Activated CD4-positive, alpha-beta memory T cell treated with anti-CD3 and anti-CD28 coated beads for 36 hours (primary cell): ENCODE measurements at regions of chr9 and their contacts with region 1.

Region 1: DNA sequence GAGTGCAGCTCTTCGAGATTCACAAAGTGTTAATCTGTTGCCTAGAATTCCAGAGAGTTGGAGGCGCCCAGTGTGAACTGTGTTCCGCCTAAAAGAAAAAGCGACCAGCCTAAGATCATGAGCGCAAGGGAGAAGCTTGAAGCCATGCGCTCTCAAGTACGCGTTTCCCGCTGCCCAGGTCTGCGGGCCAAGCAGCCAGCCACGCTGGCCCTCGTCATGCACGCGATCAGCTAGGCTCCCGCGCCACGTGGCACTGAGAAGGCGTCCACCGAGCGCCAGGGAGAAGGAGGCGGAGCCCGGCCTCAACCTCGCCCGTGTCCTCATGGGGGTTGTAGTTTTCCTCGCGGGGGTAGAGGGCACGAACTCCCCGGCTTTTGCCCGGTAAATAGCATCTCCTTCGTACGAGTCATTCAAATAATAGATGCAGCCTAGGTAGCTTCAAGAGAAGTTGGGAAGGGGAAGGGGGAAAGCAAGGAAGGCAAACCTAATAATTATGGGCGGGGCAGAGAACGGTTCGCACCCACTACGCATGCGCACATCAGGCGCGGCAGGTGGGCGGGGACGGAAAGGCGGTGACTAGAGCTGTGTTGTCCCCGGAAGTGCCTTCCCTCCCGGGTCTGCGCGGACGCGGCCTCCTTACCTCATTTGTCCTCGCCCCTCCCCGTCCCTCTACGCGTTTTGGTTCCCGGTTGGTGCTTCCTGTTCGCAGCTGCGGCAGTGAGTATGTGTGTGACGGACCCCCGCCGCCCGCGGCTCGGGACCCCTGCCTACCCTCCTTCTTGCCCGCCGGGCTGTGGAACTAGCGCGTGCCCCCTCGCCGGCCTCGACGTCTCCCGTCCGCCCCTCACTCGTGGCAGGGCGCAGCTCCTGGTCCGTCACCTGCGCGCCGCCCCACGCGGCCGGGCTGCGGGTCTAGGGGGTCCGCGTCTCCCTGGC is at the start of gene ZCCHC7:
- DNase-seq: peak; percentile 98
- H3K4me3 Mint-ChIP-seq: peak within 1 kb of the TSS; percentile 92
- H3K27ac Mint-ChIP-seq: peak within 1 kb of the TSS; percentile 92
- H3K4me1 Mint-ChIP-seq: peaks cover 33% of the 10 kb centered on the region
- H3K27me3 Mint-ChIP-seq: no peaks in the 10 kb centered on the region
- total RNA-seq, gene ZCCHC7: 26.8 to 28.1 TPM

Region 2: GRCh38 chr9:37004424-37004935 is 115.7 kb before region 1 on chr9:
- CTCF ChIA-PET with region 1: no interaction called
- POLR2A ChIA-PET with region 1: no interaction called
- intact Hi-C with region 1: no loop called
- DNase-seq: no peak
- H3K4me3 Mint-ChIP-seq: no peak overlapping the region
- H3K27ac Mint-ChIP-seq: no peak overlapping the region
- H3K4me1 Mint-ChIP-seq: peaks cover 2% of the 10 kb centered on the region
- H3K27me3 Mint-ChIP-seq: peaks cover 53% of the 10 kb centered on the region

Region 3: DNA sequence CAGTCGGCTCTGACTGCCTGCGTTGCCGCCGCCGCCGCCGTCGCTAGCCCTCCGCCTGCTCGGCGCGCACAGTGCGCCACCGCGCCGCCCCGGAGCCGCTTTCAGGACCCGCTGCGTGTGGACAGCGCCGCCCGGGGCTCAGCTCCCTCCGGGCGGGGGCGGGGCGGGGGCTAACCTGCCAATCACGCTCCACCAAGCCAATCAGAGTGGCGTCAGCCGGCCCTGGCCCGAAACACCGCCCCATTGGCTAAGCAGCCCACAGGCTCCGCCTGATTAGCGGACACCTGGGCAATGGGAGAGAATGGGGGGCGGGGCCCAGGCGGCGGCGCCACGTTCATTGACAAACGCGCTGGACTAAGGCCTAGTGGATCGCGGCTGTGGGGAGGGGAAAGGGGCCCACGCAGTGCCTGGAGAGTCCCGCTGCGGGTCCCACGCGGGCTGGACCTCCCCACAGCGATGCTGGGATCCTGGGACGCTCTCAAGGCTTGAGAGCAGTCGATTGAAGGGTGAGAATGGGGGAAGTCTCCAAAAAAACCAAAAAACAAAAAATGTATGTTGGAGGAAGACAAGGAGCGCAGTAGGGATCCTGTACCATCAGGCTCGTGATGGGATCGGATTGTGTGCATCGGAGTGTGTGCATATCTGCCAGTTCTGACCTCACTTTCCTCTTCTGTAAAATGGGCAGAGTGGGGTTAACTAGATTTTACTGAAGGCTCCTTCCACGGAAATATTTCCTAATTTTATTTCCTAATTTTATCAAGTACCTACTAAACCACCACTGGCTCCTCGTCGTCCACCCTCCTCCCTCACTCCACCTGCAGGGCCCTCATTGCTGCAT is 92.4 kb before region 1 on chr9:
- CTCF ChIA-PET with region 1: no interaction called
- POLR2A ChIA-PET with region 1: no interaction called
- intact Hi-C with region 1: loop called (anchors 5 kb)
- DNase-seq: peak; percentile 95
- H3K4me3 Mint-ChIP-seq: peak overlapping the region; percentile 62
- H3K27ac Mint-ChIP-seq: no peak overlapping the region
- H3K4me1 Mint-ChIP-seq: peaks cover 47% of the 10 kb centered on the region
- H3K27me3 Mint-ChIP-seq: peaks cover 87% of the 10 kb centered on the region

Region 4: DNA sequence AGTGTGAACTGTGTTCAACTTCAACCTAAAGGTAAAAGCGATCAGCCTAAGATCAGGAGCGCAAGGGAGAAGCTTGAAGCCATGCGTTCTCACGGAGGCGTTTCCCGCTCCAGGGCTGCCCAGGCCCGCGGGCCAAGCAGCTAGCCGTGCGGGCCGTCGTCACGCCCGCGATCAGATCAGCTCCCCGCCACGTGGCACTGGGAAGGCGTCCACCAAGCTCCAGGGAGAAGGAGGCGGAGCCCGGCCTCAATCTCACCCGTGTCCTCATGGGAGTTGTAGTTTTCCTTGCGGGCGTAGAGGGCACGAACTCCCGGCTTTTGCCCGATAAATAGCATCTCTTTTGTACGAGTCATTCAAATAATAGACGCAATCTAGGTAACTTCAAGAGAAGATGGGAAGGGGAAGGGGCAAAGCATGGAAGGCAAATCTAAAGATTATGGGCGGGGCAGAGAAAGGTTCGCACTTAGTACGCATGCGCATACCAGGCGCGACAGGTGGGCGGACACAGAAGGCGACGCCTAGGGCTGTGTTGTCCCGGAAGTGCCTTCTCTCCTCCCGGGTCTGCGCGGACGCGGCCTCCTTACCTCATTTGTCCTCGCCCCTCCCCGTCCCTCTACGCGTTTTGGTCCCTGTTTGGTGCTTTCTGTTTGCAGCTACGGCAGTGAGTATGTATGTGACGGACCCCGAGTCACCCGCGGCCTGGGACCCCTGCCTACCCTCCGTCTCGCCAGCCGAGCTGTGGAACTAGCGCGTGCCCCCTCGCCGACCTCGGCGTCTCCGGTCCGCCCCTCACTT is 40.6 kb before region 1 on chr9:
- CTCF ChIA-PET with region 1: interaction called, 3 read pairs
- POLR2A ChIA-PET with region 1: interaction called, 28 read pairs
- intact Hi-C with region 1: loop called (anchors 1 kb)
- DNase-seq: peak; percentile 96
- H3K4me3 Mint-ChIP-seq: peak overlapping the region; percentile 98
- H3K27ac Mint-ChIP-seq: peak overlapping the region; percentile 93
- H3K4me1 Mint-ChIP-seq: peaks cover 46% of the 10 kb centered on the region
- H3K27me3 Mint-ChIP-seq: peaks cover 8% of the 10 kb centered on the region